ENCODE measurements at regions of chr18 and their contacts with region 1.

Region 1: GRCh38 chr18:23924813-23925212 is 89.7 kb upstream of the TTC39C start:
- DNase-seq: no peak
- ATAC-seq: no peak
- H3K4me3 ChIP-seq: no peak overlapping the region
- H3K27ac ChIP-seq: no peak overlapping the region
- H3K4me1 ChIP-seq: peaks cover 0 to 6% (median 0%) of the 10 kb centered on the region in 4 donors
- H3K27me3 ChIP-seq: no peaks in the 10 kb centered on the region
- CTCF ChIP-seq: no peak
- POLR2A ChIP-seq: no peak

Region 2: GRCh38 chr18:23828426-23828825 is 96.4 kb before region 1 on chr18:
- intact Hi-C with region 1: loop called in 1 of 2 experiments (anchors 10 kb)
- DNase-seq: no peak
- ATAC-seq: peak in 3 of 4 donors; percentile 32 to 64 (median 40)
- H3K4me3 ChIP-seq: no peak overlapping the region
- H3K27ac ChIP-seq: no peak overlapping the region
- H3K4me1 ChIP-seq: no peaks in the 10 kb centered on the region
- H3K27me3 ChIP-seq: no peaks in the 10 kb centered on the region
- CTCF ChIP-seq: no peak
- POLR2A ChIP-seq: no peak

Region 3: GRCh38 chr18:24014062-24014985 is 89.5 kb after region 1 on chr18 and contains the start of gene TTC39C:
- intact Hi-C with region 1: no loop called
- DNase-seq: peak; percentile 79 to 89 (median 84)
- ATAC-seq: peak; percentile 65 to 80 (median 73)
- H3K4me3 ChIP-seq: peak within 1 kb of the TSS; percentile 78 to 86 (median 78)
- H3K27ac ChIP-seq: peak within 1 kb of the TSS; percentile 89 to 94 (median 89)
- H3K4me1 ChIP-seq: peaks cover 0 to 33% (median 10%) of the 10 kb centered on the region in 4 donors
- H3K27me3 ChIP-seq: no peaks in the 10 kb centered on the region
- CTCF ChIP-seq: no peak
- POLR2A ChIP-seq: peak; percentile 76
- total RNA-seq, gene TTC39C: 61.9 to 167 (median 84.4) TPM

Region 4: DNA sequence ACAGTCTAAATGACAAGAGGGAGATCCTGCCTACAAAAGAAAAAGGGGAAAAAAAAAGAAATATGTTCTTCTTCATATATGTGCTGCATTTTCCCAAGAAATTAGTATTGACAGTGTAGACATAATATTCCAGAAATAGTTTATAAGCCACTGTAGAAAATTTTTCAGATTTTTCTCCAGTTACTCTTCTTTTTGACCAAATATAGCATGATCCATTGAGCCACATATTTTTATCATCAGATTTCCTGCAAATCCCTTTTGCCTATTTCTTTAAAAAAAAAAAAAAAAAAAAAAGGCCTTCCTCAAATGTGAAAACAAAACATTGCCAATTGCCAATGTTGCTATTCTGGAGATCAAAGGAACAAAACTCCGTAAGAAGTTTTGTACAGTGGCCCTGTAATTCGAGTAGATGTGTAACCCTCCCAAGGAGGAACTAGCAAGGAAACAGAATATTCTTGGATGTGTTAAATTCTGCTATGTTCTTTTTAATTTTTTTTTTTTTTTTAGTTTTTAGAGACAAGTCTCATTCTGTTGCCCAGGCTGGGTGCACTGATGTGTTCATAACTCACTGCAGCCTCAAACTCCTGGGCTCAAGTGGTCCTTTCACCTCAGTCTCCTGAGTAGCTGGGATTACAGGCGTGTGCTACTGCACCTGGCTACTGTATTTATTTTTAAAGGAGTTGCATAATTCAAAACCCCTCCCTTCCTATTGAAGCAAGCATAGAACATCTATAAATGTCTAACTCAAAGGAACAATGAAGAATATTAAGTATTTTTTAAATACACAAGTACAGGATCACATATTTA is 201.5 kb after region 1 on chr18:
- intact Hi-C with region 1: loop called in 1 of 2 experiments (anchors 10 kb)
- DNase-seq: no peak
- ATAC-seq: no peak
- H3K4me3 ChIP-seq: no peak overlapping the region
- H3K27ac ChIP-seq: no peak overlapping the region
- H3K4me1 ChIP-seq: peaks cover 0 to 2% (median under 1%) of the 10 kb centered on the region in 4 donors
- H3K27me3 ChIP-seq: no peaks in the 10 kb centered on the region
- CTCF ChIP-seq: no peak
- POLR2A ChIP-seq: no peak

Measured in right lobe of liver (tissue), 6 donors.